IMR-90 (cell line): ENCODE measurements at regions of chrX and their contacts with region 1.

Region 1: DNA sequence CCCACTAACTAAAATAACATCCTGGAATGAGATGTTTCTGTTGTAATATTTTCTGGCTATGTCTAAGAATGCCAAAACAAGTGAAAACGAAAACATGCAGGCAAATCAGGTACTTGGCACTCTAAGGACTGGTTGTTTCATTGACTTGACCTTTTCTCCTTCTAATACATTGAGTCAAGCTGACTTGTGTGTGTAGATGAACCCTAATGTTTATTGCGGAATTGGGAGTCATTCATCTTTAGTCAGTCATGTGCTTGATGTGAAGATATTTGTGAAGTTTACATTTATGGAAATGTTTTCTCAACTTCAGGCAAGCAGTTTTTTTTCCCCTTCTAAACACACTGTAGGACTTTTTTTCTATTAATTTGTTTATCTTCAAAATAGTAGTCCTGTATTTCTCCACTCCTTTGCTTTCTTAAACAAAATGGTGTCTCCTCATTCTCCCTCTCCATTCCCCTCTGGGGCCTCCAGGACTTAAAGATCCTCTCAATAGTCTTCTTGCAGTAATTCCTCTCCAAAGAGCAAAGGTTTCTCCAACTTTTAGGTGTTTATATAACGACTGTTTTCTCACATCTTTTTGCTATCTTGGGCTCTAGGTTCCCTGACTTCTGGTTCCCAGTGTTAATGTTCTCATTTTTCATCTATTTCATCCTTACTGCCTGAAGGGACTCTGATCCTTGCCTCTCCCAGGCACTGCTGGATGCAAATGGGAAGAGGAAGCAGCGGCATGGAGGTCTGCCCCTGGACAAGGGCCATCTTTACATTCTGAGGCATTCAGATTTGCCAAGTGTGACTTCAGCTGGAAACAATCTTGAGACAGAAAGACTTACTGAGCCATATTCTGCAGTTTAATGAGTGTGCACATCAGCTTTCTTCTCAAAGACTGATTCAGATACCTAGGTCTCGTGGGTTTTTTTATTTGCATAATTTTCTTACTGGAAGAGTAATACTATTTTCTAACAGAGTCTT is 166.4 kb downstream of the ARHGAP6 start:
- DNase-seq: peak; percentile 78
- ATAC-seq: peak; percentile 62
- H3K4me3 ChIP-seq: no peak overlapping the region
- H3K27ac ChIP-seq: peak overlapping the region; percentile 92
- H3K4me1 ChIP-seq: no peaks in the 10 kb centered on the region; the same call in 1 of the 2 replicates
- H3K27me3 ChIP-seq: no peaks in the 10 kb centered on the region
- CTCF ChIP-seq: no peak
- POLR2A ChIP-seq: no peak
- RAD21 ChIP-seq: no peak

Region 2: GRCh38 chrX:11461201-11462001 is 38.0 kb before region 1 on chrX:
- CTCF ChIA-PET with region 1: no interaction called
- POLR2A ChIA-PET with region 1: no interaction called
- dilution Hi-C with region 1: no loop called
- in situ Hi-C with region 1: no loop called
- intact Hi-C with region 1: loop called (anchors 1 kb)
- DNase-seq: peak; percentile 78
- ATAC-seq: peak; percentile 88
- H3K4me3 ChIP-seq: no peak overlapping the region
- H3K27ac ChIP-seq: peak overlapping the region; percentile 88
- H3K4me1 ChIP-seq: peaks cover 4% of the 10 kb centered on the region
- H3K27me3 ChIP-seq: no peaks in the 10 kb centered on the region
- CTCF ChIP-seq: no peak
- POLR2A ChIP-seq: no peak
- RAD21 ChIP-seq: peak; percentile 3; the same call in 1 of the 2 replicates

Region 3: GRCh38 chrX:11540532-11541377 is 41.4 kb after region 1 on chrX:
- CTCF ChIA-PET with region 1: no interaction called
- POLR2A ChIA-PET with region 1: no interaction called
- dilution Hi-C with region 1: no loop called
- in situ Hi-C with region 1: no loop called
- intact Hi-C with region 1: no loop called
- DNase-seq: no peak
- ATAC-seq: 0 out of 2 replicates have a peak, but pooled peaks have one; percentile 29
- H3K4me3 ChIP-seq: no peak overlapping the region
- H3K27ac ChIP-seq: no peak overlapping the region
- H3K4me1 ChIP-seq: no peaks in the 10 kb centered on the region
- H3K27me3 ChIP-seq: no peaks in the 10 kb centered on the region
- CTCF ChIP-seq: no peak
- POLR2A ChIP-seq: no peak
- RAD21 ChIP-seq: no peak

Region 4: GRCh38 chrX:11960031-11960430 is 460.7 kb after region 1 on chrX:
- CTCF ChIA-PET with region 1: no interaction called
- POLR2A ChIA-PET with region 1: no interaction called
- dilution Hi-C with region 1: no loop called
- in situ Hi-C with region 1: no loop called
- intact Hi-C with region 1: no loop called
- DNase-seq: no peak
- ATAC-seq: no peak
- H3K4me3 ChIP-seq: no peak overlapping the region
- H3K27ac ChIP-seq: no peak overlapping the region
- H3K4me1 ChIP-seq: no peaks in the 10 kb centered on the region
- H3K27me3 ChIP-seq: no peaks in the 10 kb centered on the region
- CTCF ChIP-seq: no peak
- POLR2A ChIP-seq: no peak
- RAD21 ChIP-seq: no peak

Region 5: DNA sequence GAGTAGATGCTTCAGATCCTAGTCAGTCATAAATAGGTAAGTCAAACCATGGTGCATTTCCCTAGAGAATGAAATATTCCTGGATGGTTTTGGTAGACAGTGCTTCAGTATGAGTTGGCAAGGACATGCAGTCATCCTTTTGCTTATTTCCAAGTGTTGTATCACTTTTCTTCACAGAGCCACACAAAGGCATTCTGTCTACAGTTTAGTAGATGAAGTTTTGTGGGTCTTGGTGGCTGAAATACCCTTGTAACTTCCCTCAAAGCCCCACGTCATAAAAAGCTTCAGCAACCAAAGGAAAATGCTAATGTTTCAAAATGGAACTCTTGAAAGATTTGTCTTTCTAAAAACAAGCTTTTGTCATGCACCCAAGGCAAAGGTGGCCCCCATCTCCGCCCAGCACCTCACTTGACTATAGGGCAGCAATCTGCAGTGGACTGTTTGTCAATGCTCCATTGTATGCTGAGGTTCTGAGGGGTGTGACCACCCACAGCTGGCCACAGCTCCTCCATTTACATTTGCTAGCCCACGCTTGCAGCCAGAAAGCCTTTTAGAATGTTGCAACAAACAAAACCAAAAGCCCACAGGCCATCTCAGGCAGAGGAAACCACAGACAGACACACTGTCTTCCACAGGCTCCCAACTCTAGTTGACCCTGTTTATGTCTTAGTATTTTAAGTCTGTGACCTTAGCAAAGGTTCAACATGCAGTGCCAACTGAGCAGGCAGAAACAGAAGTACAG is 1632.2 kb after region 1 on chrX:
- CTCF ChIA-PET with region 1: no interaction called
- POLR2A ChIA-PET with region 1: no interaction called
- dilution Hi-C with region 1: no loop called
- in situ Hi-C with region 1: no loop called
- intact Hi-C with region 1: no loop called
- DNase-seq: no peak
- ATAC-seq: no peak
- H3K4me3 ChIP-seq: no peak overlapping the region
- H3K27ac ChIP-seq: no peak overlapping the region
- H3K4me1 ChIP-seq: peaks cover 4% of the 10 kb centered on the region
- H3K27me3 ChIP-seq: no peaks in the 10 kb centered on the region
- CTCF ChIP-seq: no peak
- POLR2A ChIP-seq: no peak
- RAD21 ChIP-seq: no peak